AG04450 (cell line): ENCODE measurements at regions of chrX and their contacts with region 1.

Region 1: GRCh38 chrX:95076449-95076848 is 1402.4 kb downstream of the FAM133A start:
- DNase-seq: no peak
- H3K4me3 ChIP-seq: no peak overlapping the region
- H3K27ac ChIP-seq: no peak overlapping the region
- H3K27me3 ChIP-seq: no peaks in the 10 kb centered on the region
- CTCF ChIP-seq: peak; percentile 62

Region 2: GRCh38 chrX:94633237-94633636 is 443.2 kb before region 1 on chrX:
- CTCF ChIA-PET with region 1: no interaction called
- POLR2A ChIA-PET with region 1: no interaction called
- DNase-seq: no peak
- H3K4me3 ChIP-seq: no peak overlapping the region
- H3K27ac ChIP-seq: no peak overlapping the region
- H3K27me3 ChIP-seq: no peaks in the 10 kb centered on the region
- CTCF ChIP-seq: no peak

Region 3: DNA sequence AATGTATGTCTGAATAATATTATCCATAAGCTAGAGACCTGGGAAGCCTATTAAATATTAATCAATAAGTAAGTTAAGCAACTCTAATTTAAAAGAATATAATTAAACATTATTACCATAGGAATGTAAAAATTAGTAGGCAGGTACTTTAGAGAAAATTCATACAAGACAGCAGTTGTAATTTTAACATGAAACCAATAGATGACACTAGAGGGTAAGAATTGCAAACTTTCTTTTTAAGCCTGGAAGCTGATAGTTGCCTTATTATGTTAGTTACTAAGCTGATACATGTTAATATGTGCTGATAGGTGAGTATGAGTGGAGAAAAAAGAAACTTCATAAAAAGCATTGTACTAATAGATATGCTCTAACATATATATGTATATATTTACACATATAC is 245.1 kb before region 1 on chrX:
- CTCF ChIA-PET with region 1: interaction called, 12 read pairs
- POLR2A ChIA-PET with region 1: no interaction called
- DNase-seq: no peak
- H3K4me3 ChIP-seq: no peak overlapping the region
- H3K27ac ChIP-seq: no peak overlapping the region
- H3K27me3 ChIP-seq: no peaks in the 10 kb centered on the region
- CTCF ChIP-seq: peak; percentile 19; the same call in 1 of the 2 replicates

Region 4: GRCh38 chrX:95056901-95057300 is 19.5 kb before region 1 on chrX:
- CTCF ChIA-PET with region 1: interaction called, 16 read pairs
- POLR2A ChIA-PET with region 1: no interaction called
- DNase-seq: no peak
- H3K4me3 ChIP-seq: no peak overlapping the region
- H3K27ac ChIP-seq: no peak overlapping the region
- H3K27me3 ChIP-seq: no peaks in the 10 kb centered on the region
- CTCF ChIP-seq: 0 out of 2 replicates have a peak, but pooled peaks have one; percentile 17